ENCODE measurements at regions of chr1 and their contacts with region 1.

Region 1: GRCh38 chr1:71049951-71050598 is 2.5 kb upstream of the PTGER3 start:
- DNase-seq: peak in 3 of 5 donors; percentile 23 to 86 (median 83)
- H3K4me3 ChIP-seq: no peak overlapping the region
- H3K27ac ChIP-seq: no peak overlapping the region
- H3K4me1 ChIP-seq: peaks cover 0 to 9% (median 4%) of the 10 kb centered on the region in 3 donors
- H3K27me3 ChIP-seq: peaks cover 15% of the 10 kb centered on the region
- CTCF ChIP-seq: peak; percentile 79

Region 2: DNA sequence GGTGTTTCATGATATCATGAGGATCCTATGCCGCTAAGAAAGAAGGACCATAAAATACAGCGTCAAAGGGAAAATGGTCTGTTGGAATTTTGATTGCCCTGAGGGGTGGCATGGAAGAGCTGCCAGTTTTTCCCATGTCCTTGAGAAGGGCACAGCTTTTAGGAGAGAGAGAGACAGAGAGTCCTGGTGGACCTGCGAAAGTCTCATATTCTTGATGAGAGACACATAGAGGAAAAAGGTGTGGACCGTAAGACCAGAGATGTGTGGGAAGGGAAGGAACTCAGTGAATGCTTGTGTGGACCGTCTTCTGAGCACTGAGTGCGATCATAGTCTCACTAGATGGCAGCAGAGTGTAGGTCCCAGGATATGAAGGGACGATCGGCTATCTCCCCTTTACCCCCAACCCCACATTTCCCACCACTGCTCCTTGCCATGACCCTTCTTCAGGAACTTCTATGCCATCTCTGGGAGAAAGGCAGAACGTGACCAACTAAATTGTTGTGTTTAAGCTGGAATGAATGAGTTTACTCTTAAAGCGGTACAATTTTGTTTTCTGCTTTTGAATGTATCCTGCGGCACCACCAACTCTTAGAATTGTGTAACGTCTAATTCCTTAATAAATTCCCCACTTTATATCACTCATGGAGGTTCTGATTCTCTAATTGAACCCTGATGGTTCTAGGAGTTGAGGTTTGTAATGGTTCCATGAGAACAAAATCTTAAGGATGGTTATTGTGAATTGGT is 521.3 kb before region 1 on chr1:
- intact Hi-C with region 1: loop called (anchors 5 kb)
- DNase-seq: peak in 3 of 5 donors; percentile 31 to 53 (median 42)
- H3K4me3 ChIP-seq: peak overlapping the region in 1 of 3 donors; percentile 44
- H3K27ac ChIP-seq: no peak overlapping the region
- H3K4me1 ChIP-seq: no peaks in the 10 kb centered on the region
- H3K27me3 ChIP-seq: no peaks in the 10 kb centered on the region
- CTCF ChIP-seq: peak; percentile 40

Region 3: DNA sequence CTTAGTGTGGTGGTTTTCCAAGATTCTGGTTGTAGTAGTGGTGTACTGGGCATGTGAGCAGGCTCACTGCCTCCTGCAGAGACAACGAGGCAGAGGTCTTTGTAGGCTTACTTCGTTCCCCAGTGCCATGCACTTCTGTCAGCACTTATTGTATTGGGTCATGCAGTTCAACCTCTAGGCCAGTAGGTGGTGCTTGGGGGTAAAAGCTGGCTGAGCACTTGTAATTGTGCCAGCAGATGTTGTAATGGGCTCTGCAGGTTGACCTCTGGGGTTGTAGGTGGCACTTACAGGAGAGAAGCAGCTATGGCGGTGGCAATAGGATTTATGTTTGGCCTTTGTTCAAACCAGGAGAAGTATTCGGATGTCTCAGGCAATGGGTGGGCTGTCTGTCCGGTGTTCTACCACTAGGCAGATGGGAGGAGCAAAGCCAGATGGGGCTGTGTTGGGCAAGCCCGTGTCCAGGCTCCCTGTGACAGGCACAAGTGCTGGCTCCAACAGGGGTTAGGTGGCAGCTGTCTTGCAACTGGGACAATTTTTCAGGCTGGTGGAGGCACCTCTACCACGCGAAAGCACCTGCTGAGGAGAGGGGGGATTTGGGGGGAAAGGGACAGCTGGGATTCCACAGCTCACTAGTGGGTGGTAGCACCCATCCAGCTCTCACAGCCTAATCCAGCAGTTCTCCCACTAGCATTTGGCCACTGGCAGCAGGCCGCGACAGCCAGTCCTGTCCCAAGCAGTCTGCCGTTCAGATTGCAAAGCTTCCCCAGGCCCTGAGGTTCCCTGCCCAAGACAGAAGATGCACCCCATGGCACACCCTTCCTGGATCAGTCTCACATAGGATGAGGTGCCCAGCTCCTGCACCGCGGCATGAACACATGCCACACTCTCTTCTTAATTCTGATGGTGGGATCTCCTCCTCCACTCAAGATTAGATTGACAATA is 364.5 kb before region 1 on chr1:
- intact Hi-C with region 1: loop called (anchors 10 kb)
- DNase-seq: peak; percentile 51 to 71 (median 67)
- H3K4me3 ChIP-seq: no peak overlapping the region
- H3K27ac ChIP-seq: no peak overlapping the region
- H3K4me1 ChIP-seq: peaks cover 0 to 3% (median 0%) of the 10 kb centered on the region in 3 donors
- H3K27me3 ChIP-seq: no peaks in the 10 kb centered on the region
- CTCF ChIP-seq: peak; percentile 89

Region 4: DNA sequence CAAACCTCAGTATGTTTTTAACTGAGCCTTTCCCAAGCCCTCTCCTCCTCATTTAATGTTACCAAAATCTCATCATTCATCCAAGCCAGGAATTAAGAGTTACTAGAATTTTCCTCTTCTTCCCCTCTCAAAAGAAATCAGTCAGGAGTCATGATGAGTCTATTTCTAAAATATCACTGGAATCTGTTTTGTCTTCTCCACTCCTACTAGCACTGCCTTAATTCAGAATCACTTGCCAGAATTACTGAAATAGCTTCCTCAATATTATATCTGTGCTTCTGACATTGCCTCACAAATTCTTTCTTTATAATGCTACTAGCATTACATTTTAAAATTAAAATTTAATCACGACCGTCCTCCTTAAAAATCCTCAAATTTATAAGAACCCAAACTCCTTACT is 108.5 kb before region 1 on chr1:
- intact Hi-C with region 1: no loop called
- DNase-seq: no peak
- H3K4me3 ChIP-seq: no peak overlapping the region
- H3K27ac ChIP-seq: no peak overlapping the region
- H3K4me1 ChIP-seq: peaks cover 0 to 5% (median 2%) of the 10 kb centered on the region in 3 donors
- H3K27me3 ChIP-seq: no peaks in the 10 kb centered on the region
- CTCF ChIP-seq: no peak

Region 5: GRCh38 chr1:70978623-70979022 is 71.5 kb before region 1 on chr1:
- intact Hi-C with region 1: no loop called
- DNase-seq: no peak
- H3K4me3 ChIP-seq: no peak overlapping the region
- H3K27ac ChIP-seq: no peak overlapping the region
- H3K4me1 ChIP-seq: peaks cover 0 to 6% (median 0%) of the 10 kb centered on the region in 3 donors
- H3K27me3 ChIP-seq: no peaks in the 10 kb centered on the region
- CTCF ChIP-seq: no peak

Measured in kidney (tissue), 22 donors.